ENCODE measurements at regions of chr3 and their contacts with region 1.

Region 1: DNA sequence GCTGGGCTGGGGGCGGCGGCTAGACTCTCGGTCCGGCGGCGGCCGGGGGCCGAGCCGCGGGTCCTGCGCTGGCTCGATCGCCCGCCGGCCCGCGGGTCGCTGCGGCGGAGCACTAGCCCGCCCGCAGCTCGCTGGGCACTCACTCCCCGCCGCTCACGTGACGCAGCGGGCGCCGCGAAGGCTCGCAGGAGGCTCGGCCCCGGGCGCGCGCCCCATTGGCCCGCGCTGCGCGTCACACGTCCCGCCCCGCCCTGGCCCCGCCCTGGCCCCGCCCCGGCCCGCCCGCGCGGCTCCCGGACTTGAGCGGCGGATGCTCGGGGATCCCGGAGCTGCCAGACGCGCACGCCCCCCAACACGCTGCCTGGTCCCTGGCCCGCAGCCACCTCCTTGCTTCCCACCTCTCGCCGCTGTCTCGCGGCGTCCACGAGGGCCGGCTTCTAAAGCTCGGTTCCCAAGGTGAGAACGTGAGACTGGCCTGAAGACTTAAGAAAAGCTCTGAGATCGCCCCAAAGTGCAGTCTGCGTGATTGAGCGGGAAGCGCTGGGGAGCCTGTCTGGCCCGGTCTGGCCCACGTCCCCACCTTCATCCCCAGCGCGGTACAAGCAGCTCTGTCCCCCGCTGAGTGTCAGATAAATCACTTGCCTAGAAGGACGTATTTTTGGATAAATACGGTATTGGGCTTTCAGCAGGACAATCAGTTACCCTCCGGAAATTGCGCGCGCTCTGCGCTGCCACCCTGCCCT is at the start of gene KLF15:
- DNase-seq: peak; percentile 94
- ATAC-seq: peak; percentile 73
- total RNA-seq, gene KLF15: 33.0 TPM

Region 2: GRCh38 chr3:126267226-126267975 is 90.1 kb before region 1 on chr3:
- intact Hi-C with region 1: loop called (anchors 1 kb)
- DNase-seq: peak; percentile 90
- ATAC-seq: peak; percentile 83

Region 3: DNA sequence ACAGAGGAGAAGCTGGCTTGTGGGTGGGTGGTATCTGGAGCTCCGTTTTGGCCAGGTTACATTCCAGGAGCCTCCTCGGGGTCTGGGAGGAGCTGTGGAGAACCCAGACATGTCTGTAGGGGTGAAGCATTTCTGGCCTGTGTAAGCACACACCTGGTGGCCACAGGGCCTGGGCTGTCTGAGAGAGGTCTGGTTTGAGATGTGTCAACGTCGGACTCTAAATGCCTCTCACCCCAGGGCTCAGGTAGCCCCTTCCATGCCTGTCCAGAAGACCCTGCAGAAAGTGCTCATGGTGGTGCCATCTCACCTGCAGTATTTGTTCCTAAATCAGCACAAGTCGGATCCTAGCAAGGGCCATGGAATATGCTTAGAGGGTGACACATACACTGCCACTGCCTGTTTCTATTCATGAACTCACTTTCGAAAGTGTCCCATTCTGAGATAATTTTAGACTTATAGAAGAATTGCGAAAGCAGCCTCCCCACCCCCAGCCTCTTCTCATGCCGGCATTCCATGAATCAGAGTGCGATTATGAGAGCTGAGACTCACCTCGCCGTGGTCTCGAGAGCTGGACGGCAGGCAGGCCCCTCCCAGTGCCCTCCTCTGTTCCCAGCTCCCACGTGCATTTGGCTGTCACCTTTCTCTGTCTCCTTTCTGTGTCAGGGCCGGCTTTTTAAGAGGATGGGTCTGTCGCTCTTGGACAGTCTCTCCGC is 63.9 kb before region 1 on chr3:
- intact Hi-C with region 1: loop called (anchors 5 kb)
- DNase-seq: peak; percentile 73
- ATAC-seq: peak; percentile 85

Region 4: DNA sequence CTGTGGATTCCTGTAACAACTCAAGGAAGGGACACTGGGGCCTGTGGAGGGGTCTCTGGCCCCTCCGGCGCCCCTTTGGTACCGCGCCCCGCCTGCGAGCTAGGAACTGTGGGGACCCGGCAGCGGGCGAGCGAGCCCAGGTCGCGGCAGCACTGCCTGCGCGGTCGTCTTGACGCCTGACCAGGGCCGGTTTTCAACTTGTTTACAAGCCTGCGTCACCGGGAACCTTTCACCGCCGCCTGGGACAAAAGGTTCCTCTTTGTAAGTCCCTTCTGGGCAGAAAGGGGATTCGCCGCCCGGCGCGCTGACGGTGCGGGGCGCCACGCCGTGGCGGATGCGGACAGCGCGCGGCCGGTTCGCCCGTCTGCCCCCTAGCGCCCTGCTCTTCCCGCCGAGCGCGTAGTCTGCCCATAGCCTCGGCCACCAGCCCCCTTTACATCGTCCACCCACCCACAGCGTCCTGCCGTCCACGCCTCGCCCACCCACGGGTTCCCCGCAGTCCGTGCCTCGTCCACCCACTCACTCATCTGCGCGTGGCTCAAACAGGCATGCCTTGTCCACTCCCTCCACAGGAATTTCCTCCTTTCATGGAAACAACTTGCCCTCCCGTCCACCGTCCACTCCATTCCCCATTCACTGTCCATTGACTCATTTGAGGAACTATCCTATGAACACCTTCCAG is 31.8 kb after region 1 on chr3:
- intact Hi-C with region 1: loop called (anchors 2 kb)
- DNase-seq: peak; percentile 95
- ATAC-seq: peak; percentile 97